Activated T-helper 2 cell treated with anti-CD3 and anti-CD28 coated beads, Interferon-gamma antibody, Interleukin-2, Interleukin-4, amounts not matched to agents 10 μg/mL and 5 μg/mL and 100 μg/mL, durations not matched to agents 14 hours and 24 hours and 36 hours (primary cell): ENCODE measurements at regions of chr2 and their contacts with region 1.

Region 1: DNA sequence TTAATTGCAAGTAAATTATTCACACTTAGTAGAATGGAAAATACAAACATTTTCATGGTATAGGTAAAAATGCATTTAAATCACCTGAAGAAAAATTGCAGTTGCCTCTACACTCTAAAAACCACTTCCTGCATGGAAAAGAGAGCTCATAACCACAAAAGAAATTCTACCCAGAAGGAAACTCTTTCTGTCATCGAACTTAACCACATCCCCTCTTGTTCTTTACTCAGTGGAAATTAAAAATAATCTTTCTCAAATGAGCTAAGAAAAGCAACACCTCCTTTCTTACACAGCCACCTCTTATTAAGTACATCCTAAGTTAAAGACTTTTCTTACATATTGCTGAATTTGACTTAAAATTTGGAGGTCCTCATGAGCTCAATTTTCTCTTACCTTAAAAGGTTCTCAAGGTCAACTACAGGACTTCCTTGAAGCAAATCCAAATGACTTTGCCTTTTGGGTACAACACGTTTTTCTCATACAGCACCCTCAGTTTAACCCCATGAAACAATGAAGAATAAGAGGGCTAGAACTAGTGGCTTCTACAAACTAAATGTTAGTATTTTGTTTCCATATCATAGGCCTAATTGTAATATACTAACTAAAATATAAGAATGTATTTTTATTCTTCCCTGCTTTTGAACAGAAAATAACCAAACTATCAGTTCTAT is 109.1 kb upstream of the CRIM1 start:
- DNase-seq: no peak
- H3K4me3 Mint-ChIP-seq: peak overlapping the region; percentile 44
- H3K27ac Mint-ChIP-seq: peak overlapping the region; percentile 81
- H3K4me1 Mint-ChIP-seq: peaks cover 52% of the 10 kb centered on the region
- H3K27me3 Mint-ChIP-seq: peaks cover 2% of the 10 kb centered on the region

Region 2: DNA sequence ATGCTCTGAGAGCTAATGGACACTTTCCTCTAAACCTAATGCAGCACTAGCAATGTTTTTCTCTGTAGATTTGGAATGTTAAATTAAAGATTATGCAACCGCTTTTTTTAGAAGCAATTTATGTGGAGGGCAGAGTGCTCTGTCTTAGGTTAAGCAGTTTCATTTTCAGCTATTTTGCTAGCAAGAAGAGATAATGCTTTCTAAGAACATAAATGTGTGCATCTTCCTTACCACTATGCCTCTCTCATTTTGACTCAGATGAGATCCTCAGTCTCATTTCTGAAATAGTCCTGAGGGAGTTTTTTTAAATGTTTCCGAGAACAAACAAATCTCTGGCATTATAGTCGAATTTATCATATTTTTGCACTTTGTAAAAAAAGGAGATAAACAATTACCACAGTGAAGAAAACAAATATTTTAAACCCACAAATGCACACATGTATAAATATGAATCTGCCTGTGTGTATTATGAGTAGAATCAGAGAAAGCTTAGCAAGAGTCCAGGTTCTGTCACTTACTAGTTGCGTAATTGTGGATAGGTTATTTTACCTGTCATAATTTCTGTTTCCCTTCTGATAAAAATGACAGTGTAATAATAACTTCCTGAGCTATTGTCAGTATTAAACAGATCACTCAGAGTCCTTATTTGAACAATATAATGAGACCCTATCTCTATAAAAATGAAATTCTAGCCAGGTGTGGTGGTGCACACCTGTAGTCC is 98.6 kb before region 1 on chr2:
- intact Hi-C with region 1: loop called (anchors 1 kb)
- DNase-seq: no peak
- H3K4me3 Mint-ChIP-seq: no peak overlapping the region
- H3K27ac Mint-ChIP-seq: no peak overlapping the region
- H3K4me1 Mint-ChIP-seq: peaks cover 27% of the 10 kb centered on the region
- H3K27me3 Mint-ChIP-seq: peaks cover 39% of the 10 kb centered on the region

Region 3: DNA sequence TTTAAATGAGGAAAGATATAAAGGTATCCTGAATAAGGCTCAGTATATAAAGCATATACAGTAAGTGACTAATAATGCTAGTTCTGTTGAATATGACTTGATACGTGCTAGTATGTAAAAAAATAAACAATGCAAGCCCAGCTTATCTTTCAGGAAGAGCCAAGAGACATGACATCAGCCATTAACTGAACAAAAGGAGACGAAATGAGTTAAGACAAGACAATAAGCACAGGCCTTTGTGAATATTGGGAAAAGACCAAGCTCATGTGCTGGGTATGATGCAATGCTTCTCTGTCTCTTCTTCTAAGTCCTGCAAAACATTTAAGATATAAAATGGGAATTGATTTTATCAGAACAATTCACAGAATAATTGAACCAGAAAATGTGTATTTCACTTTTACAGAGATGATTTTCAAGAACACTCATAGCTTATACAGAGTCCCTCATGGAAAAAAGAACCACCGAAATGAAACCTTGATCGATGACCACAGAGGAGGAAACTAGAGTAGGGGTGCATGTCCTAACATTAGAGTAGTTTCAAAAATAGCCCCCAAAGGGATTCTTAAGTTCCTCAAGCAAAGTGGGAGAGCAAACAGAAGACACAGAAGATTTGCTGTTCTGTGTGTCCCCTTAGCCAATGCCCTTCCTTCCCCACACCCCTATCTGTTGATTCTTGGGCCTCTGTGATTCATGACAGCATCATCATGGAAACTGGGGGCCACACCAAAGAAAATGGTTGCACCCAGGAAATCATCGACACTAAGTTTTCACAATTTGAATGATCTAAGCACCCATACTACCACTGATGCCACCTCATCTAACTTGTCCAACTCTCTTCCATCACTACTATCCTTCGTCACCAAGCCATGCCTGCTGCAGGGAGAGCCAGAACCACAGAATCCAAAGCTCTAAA is 41.2 kb after region 1 on chr2:
- intact Hi-C with region 1: loop called (anchors 1 kb)
- DNase-seq: no peak
- H3K4me3 Mint-ChIP-seq: no peak overlapping the region
- H3K27ac Mint-ChIP-seq: peak overlapping the region; percentile 68
- H3K4me1 Mint-ChIP-seq: peaks cover 12% of the 10 kb centered on the region
- H3K27me3 Mint-ChIP-seq: no peaks in the 10 kb centered on the region

Region 4: GRCh38 chr2:36433311-36434217 is 187.1 kb after region 1 on chr2:
- intact Hi-C with region 1: no loop called
- DNase-seq: no peak
- H3K4me3 Mint-ChIP-seq: no peak overlapping the region
- H3K27ac Mint-ChIP-seq: no peak overlapping the region
- H3K4me1 Mint-ChIP-seq: no peaks in the 10 kb centered on the region
- H3K27me3 Mint-ChIP-seq: peaks cover 6% of the 10 kb centered on the region

Region 5: DNA sequence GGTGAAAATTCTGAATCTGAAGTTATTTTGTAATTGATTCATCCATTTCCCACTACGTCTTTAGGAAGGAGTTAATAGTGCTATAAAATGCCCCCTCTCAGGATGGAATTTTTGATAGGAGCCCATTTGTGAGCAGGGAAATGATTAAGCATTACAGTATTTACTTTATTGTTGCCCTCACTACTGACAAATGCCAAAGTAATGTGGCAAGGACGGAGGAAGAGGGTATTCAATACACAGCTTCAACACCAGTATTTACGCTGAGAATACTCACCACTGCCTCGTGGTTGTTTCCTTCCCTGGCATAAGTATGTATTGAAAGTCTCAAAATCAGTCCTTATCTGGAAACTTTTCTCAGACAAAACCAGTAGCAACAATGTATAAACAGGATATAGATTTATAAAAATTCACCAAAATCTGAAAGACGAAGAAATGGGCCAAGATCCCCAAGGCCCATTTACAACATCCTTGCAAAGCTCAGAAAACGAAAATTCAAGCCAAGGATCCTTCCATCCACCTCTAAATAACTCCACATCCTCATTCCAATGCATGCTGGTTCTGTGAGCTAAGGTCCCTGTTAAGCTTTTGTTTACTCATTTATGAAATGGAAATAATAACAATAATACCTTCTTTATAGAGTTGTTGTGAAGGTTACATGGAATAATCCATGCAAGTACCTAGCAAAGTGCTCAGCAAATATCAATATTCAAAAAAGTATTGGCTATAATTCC is 322.2 kb after region 1 on chr2:
- intact Hi-C with region 1: no loop called
- DNase-seq: no peak
- H3K4me3 Mint-ChIP-seq: no peak overlapping the region
- H3K27ac Mint-ChIP-seq: no peak overlapping the region
- H3K4me1 Mint-ChIP-seq: peaks cover 3% of the 10 kb centered on the region
- H3K27me3 Mint-ChIP-seq: no peaks in the 10 kb centered on the region

Region 6: GRCh38 chr2:36966370-36967235 is 720.1 kb after region 1 on chr2 and contains the start of gene STRN:
- intact Hi-C with region 1: loop called (anchors 10 kb)
- DNase-seq: peak; percentile 98
- H3K4me3 Mint-ChIP-seq: peak within 1 kb of the TSS; percentile 96
- H3K27ac Mint-ChIP-seq: peak within 1 kb of the TSS; percentile 96
- H3K4me1 Mint-ChIP-seq: peaks cover 33% of the 10 kb centered on the region
- H3K27me3 Mint-ChIP-seq: no peaks in the 10 kb centered on the region
- total RNA-seq, gene STRN: 27.7 and 29.7 TPM in 2 replicates